ENCODE measurements at regions of chr19 and their contacts with region 1.

Region 1: DNA sequence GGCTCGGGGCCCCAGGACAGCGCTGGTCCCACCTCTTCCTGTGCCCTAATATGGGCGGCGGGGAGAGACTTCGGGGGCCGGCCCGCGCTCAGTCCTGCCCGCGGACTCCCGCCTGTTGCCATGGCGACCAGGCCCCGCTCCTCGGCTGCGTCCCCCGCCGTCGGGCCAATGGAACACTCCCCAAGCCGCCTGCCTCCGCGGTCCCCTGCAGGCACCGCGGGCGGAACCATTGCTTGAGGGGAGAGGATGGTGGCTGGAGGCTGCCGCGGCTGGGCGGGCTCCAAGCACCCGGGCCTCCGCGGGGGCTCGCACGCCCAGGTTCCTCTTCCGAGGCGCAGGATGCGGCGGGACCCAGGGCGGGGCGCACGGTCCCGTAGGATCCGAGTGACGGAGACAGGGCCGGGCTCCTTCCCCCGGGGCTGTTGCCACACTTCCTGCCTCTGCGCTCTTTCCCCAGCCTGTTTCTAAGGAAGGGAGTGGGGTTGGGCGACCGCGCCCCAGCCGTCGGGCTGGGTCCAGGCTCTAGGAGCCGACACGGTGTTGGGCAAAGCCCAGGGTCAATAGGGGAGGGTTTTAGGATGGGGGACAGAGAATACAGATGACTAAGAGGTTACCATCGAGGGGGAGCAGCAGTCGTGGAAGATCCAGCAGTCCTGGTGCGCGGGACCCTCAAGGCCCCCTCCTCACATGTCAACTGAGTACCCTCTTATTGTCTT is 1.2 kb upstream of the JUNB start:
- DNase-seq: peak; percentile 96 to 100 (median 97)
- H3K4me3 ChIP-seq: peak overlapping the region; percentile 44 to 97 (median 80)
- H3K27ac ChIP-seq: peak overlapping the region; percentile 100
- H3K4me1 ChIP-seq: peaks cover 6 to 36% (median 29%) of the 10 kb centered on the region in 3 donors
- H3K27me3 ChIP-seq: no peaks in the 10 kb centered on the region
- CTCF ChIP-seq: no peak

Region 2: GRCh38 chr19:12669270-12670158 is 120.5 kb before region 1 on chr19:
- intact Hi-C with region 1: loop called (anchors 10 kb)
- DNase-seq: peak; percentile 83 to 94 (median 91)
- H3K4me3 ChIP-seq: peak overlapping the region; percentile 77 to 93 (median 84)
- H3K27ac ChIP-seq: peak overlapping the region; percentile 97 to 99
- H3K4me1 ChIP-seq: peaks cover 0 to 29% (median 18%) of the 10 kb centered on the region in 3 donors
- H3K27me3 ChIP-seq: no peaks in the 10 kb centered on the region
- CTCF ChIP-seq: no peak

Region 3: DNA sequence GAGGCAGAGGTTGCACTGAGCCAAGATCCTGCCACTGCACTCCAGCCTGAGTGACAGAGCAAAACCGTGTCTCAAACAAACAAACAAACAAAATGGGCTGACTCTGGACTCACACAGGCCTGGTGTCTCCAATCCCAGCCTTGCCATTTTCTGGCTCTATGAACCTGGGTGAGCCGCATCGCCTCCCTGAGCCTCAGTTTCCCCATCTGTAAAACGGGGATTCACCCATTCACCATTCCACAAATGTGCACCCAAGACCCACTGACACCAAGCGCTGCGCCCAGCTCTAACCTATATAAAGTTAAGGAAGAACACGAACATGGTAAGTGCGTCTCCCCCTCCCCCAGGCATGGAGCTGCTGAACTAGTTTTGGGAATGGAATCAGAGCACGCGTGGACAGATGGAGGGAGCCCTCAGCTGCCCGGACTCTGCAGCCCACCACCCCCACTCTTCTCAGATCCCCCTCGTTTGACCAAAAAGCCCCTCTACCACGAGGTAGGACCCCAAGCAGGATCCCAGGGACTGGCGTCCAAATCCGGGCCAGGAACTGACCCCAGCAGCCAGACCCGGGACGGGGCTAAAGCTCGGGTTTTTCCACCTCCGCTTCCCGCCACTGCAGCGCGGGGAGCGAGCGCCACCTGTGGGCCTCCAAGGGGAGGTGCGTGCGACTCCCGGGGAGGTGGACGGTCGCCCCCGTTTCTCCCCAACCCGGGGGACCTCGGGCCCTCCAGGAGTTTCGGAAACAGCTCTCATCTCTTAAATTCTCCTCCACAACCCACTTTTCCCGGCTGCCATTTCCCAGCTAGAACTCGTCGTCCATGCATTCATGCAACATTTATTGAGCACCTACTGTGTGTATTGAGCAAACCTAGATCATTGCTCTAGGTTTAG is 1558.2 kb after region 1 on chr19:
- intact Hi-C with region 1: no loop called
- DNase-seq: peak; percentile 70 to 88 (median 78)
- H3K4me3 ChIP-seq: peak overlapping the region in 1 of 3 donors; percentile 28
- H3K27ac ChIP-seq: no peak overlapping the region
- H3K4me1 ChIP-seq: peaks cover 0 to 2% (median 0%) of the 10 kb centered on the region in 3 donors
- H3K27me3 ChIP-seq: no peaks in the 10 kb centered on the region
- CTCF ChIP-seq: peak; percentile 81

Measured in kidney (tissue), 22 donors.